ENCODE measurements at regions of chr2 and their contacts with region 1.

Region 1: DNA sequence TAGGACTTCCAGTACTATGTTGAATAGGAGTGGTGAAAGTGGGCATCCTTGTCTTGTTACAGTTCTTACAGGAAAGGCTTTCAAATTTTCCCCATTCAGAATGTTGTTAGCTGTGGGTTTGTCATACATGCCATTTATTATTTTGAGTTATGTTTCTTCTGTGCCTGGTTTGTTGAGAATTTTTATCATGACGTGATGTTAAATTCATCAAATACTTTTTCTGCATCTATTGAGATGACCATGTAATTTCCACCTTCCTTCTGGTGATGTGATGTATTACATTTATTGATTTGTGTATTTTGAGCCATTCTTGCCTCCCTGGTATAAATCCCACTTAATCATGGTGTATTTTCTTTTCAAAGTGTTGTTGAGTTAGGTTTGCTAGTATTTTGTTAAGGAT is 439.5 kb downstream of the XIRP2 start:
- DNase-seq: no peak
- ATAC-seq: no peak
- H3K4me3 ChIP-seq: no peak overlapping the region
- H3K27ac ChIP-seq: no peak overlapping the region
- H3K4me1 ChIP-seq: no peaks in the 10 kb centered on the region
- H3K27me3 ChIP-seq: no peaks in the 10 kb centered on the region

Region 2: DNA sequence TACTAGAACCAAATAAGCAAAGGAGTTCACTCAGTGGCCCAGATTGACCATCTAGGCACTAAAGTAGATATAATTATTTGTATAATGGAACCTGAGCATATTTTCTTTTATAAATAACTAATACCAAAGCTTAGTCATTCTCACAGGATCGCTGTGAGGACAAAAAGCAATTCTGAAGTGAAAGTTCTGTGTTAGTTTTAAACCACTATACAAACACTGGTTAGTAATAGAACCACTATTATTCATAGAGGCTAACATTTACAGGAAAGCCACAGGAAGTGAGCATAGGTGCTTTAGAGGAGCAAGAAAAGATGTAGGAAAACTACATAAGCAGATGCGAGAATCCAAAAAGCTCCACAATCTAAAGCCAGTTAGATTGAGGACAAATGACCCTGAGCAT is 74.7 kb before region 1 on chr2:
- intact Hi-C with region 1: no loop called
- DNase-seq: no peak
- ATAC-seq: no peak
- H3K4me3 ChIP-seq: no peak overlapping the region
- H3K27ac ChIP-seq: no peak overlapping the region
- H3K4me1 ChIP-seq: no peaks in the 10 kb centered on the region
- H3K27me3 ChIP-seq: no peaks in the 10 kb centered on the region

Region 3: GRCh38 chr2:167310442-167310841 is 17.3 kb before region 1 on chr2:
- intact Hi-C with region 1: loop called in 1 of 4 experiments (anchors 2 kb)
- DNase-seq: no peak
- ATAC-seq: no peak
- H3K4me3 ChIP-seq: no peak overlapping the region
- H3K27ac ChIP-seq: no peak overlapping the region
- H3K4me1 ChIP-seq: no peaks in the 10 kb centered on the region
- H3K27me3 ChIP-seq: no peaks in the 10 kb centered on the region